Cardiac septum (tissue), 1 donor: ENCODE measurements at regions of chr4 and their contacts with region 1.

Region 1: GRCh38 chr4:77156533-77156911 is 485 bp upstream of the CCNG2 start:
- DNase-seq: peak; percentile 97

Region 2: GRCh38 chr4:76993787-76994641 is 162.5 kb before region 1 on chr4:
- intact Hi-C with region 1: no loop called
- DNase-seq: no peak

Region 3: GRCh38 chr4:77075869-77076799 is 80.4 kb before region 1 on chr4 and contains the start of gene CCNI:
- intact Hi-C with region 1: loop called (anchors 1 kb)
- DNase-seq: peak; percentile 98
- total RNA-seq, gene CCNI: 338 TPM

Region 4: GRCh38 chr4:77095101-77095821 is 61.3 kb before region 1 on chr4:
- intact Hi-C with region 1: loop called (anchors 5 kb)
- DNase-seq: peak; percentile 87

Region 5: GRCh38 chr4:77193511-77194102 is 37.1 kb after region 1 on chr4:
- intact Hi-C with region 1: no loop called
- DNase-seq: peak; percentile 92